GM10248 (cell line): ENCODE measurements at regions of chr2 and their contacts with region 1.

Region 1: GRCh38 chr2:76256458-76257084 is 545.9 kb upstream of the GCFC2 start:
- DNase-seq: no peak
- CTCF ChIP-seq: no peak

Region 2: DNA sequence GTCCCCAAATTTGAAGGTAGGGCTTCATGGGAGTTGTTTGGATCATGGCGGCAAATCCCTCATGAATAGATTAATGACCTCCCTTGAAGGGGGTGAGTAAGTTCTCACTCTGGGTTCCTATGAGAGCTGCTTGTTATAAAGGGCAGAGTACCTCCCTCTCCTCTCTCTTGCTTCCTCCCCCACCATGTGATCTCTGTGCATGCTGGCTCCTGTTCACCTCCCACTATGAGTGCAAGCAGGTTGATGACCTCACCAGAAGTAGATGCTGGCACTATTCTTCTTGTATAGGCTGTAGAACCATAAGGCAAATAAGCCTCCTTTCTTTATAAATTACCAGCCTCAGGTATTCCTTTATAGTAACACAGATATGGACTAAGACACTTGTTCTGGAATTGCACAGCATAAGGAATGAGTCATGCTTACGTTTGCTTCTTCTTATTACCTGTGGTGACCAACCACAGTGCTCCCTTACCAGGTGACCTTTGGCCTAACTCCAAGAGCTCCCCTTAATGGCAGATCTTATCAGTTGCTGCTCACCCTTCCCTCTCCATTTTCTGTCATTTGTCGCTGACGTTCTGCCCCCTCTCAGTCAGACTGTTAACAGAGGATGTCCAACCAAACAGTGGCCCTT is 13.6 kb after region 1 on chr2:
- CTCF ChIA-PET with region 1: interaction called, 11 read pairs
- POLR2A ChIA-PET with region 1: no interaction called
- DNase-seq: no peak
- CTCF ChIP-seq: no peak